ENCODE measurements at regions of chr10 and their contacts with region 1.

Region 1: DNA sequence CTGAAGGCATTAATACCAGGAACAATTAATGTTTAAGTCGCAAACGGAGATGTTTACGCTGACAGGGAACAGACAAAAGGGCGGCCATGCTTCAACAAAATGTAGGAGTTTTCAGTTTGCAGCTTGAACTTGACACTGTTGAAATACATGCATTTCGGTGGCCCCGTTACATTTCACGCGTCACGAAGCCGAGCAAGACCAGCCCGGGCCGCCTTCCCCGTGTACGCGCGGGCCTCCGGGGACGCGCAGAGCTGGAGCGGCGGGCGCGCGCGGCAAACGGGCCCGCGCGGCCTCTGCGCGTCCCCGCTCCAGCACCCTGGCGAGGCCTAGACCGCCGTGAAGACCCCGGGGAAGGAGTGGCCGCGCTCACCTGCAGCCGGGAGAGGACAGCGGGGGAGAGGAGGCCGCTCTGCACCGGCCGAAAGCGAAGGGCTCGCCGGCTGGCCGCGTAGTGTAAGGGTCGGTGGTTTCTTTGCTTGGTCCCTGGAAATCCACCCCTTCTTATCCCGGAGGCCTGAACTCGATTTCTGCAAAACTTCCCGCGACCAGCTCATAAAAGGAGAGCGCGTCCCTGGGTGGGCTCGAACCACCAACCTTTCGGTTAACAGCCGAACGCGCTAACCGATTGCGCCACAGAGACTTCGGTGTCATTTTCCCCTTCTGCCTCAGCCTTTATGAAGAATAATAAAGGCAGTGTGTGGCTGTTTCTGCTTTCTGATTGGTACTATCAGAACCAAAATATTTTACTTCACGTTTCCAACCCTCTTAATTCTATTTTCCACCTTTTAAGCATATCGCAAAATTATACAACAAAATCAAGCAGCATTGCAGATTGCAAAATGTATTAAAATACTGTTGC is 11.4 kb upstream of the EBLN1 start:
- DNase-seq: peak; percentile 85 to 93
- ATAC-seq: peak; percentile 84 to 93 (median 85)
- H3K4me3 ChIP-seq: peak overlapping the region; percentile 69
- H3K4me3 Mint-ChIP-seq: peak overlapping the region; percentile 93
- H3K27ac ChIP-seq: peak overlapping the region; percentile 70
- H3K27ac Mint-ChIP-seq: peak overlapping the region; percentile 96 to 97
- H3K4me1 ChIP-seq: peaks cover 3% of the 10 kb centered on the region
- H3K4me1 Mint-ChIP-seq: peaks cover 15 to 21% of the 10 kb centered on the region in 2 donors
- H3K27me3 ChIP-seq: peaks cover 4% of the 10 kb centered on the region
- H3K27me3 Mint-ChIP-seq: peaks cover 14 to 16% of the 10 kb centered on the region in 2 donors
- CTCF ChIP-seq: no peak

Region 2: DNA sequence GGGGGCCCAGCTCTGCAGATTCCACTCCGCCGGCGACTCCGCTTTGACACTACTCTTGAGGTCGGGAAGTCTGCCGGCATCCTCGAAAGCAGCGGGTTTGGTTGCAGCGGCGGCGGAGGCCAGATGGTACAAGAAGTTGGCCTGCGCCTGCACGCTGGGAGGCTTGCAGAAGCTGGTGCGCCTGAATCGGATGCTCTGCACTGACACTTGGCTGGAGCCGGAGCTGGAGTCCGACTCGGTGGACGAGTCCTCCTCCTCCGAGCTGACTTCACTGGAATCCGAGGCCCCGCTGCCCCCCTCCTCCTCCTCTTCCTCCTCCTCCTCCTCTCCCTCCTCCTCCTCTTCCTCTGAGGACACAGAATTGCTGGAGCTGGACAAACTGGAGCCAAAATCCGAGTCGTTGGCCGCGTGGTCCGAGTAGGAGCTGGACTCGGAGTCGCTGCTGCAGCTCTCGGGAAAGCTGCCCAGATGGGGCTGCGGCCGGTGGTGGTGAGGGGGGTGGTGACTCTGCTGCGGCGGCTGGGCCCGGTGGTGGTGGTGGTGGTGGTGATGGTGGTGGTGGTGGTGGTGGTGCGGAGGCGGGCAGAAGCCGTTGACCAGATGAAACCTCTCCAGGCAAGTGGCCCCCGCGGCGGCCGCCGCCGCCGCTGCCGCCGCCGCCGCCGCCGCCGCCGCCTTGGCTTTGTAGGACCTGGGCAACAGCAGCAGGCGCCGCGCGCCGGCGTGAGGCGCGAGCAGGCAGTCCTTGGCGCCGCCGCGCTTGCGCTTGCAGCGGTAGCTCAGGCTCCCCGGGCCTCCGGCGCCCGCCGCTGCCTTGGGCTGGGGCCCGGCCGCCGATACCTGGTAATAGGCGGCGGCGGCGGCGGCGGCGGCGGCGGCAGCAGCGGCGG is 712.7 kb before region 1 on chr10:
- intact Hi-C with region 1: loop called (anchors 5 kb)
- DNase-seq: peak; percentile 36 to 79
- ATAC-seq: peak; percentile 72 to 83 (median 79)
- H3K4me3 ChIP-seq: peak overlapping the region; percentile 20
- H3K4me3 Mint-ChIP-seq: peak overlapping the region; percentile 86
- H3K27ac ChIP-seq: no peak overlapping the region
- H3K27ac Mint-ChIP-seq: no peak overlapping the region
- H3K4me1 ChIP-seq: peaks cover 34% of the 10 kb centered on the region
- H3K4me1 Mint-ChIP-seq: peaks cover 24 to 29% of the 10 kb centered on the region in 2 donors
- H3K27me3 ChIP-seq: peaks cover 82% of the 10 kb centered on the region
- H3K27me3 Mint-ChIP-seq: peaks cover 67 to 83% of the 10 kb centered on the region in 2 donors
- CTCF ChIP-seq: no peak

Region 3: DNA sequence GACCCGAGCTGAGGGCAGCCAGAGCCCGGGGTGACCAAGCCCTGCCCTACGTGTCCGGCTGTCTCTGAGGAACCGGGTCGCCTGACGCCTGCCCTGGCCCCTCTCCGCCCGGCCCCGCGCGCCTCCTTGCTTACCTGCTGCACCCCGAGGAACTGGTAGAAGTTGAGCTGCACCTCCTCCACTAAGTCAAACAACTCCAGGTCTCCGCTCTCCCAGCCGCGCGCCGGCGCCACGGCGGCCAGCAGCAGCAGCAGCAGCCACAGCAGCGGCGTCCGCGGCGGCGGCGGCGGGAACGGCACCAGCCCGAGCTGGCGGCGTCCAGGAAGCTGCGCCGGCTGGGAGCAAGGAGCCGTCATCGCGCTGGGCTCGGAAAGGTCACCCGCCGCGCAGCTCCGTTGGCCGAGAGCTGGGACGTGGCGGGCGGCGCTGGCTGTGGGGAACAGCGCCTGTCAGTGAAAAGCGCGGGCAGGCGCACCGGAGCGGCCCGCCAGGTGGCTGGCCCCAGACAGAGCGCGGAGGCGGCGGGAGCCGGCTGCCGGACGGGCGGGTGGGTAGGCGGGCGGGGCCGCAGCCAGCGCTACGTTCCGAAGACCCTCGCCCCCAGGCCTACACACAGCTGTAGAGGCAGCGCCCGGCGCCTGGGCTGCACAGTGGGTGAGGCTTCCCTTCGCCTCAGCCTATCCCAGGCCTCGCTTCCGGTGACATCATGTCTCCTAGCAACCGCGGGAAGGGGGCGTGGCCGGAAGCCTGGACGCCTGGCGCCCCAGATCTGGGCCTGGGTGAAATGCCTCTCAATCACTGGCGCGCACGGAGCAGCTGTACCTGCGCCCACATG is 225.9 kb before region 1 on chr10 and contains the start of gene DNAJC1:
- intact Hi-C with region 1: loop called (anchors 5 kb)
- DNase-seq: peak; percentile 96 to 98
- ATAC-seq: peak; percentile 84 to 96 (median 89)
- H3K4me3 ChIP-seq: peak within 1 kb of the TSS; percentile 96
- H3K4me3 Mint-ChIP-seq: peak within 1 kb of the TSS; percentile 91
- H3K27ac ChIP-seq: peak within 1 kb of the TSS; percentile 97
- H3K27ac Mint-ChIP-seq: peak within 1 kb of the TSS; percentile 85 to 88
- H3K4me1 ChIP-seq: peaks cover 4% of the 10 kb centered on the region
- H3K4me1 Mint-ChIP-seq: peaks cover 38 to 45% of the 10 kb centered on the region in 2 donors
- H3K27me3 ChIP-seq: no peaks in the 10 kb centered on the region
- H3K27me3 Mint-ChIP-seq: peaks cover 0 to 5% of the 10 kb centered on the region in 2 donors
- CTCF ChIP-seq: peak; percentile 9
- total RNA-seq, gene DNAJC1: 38.4 to 63.7 (median 50.6) TPM

Region 4: DNA sequence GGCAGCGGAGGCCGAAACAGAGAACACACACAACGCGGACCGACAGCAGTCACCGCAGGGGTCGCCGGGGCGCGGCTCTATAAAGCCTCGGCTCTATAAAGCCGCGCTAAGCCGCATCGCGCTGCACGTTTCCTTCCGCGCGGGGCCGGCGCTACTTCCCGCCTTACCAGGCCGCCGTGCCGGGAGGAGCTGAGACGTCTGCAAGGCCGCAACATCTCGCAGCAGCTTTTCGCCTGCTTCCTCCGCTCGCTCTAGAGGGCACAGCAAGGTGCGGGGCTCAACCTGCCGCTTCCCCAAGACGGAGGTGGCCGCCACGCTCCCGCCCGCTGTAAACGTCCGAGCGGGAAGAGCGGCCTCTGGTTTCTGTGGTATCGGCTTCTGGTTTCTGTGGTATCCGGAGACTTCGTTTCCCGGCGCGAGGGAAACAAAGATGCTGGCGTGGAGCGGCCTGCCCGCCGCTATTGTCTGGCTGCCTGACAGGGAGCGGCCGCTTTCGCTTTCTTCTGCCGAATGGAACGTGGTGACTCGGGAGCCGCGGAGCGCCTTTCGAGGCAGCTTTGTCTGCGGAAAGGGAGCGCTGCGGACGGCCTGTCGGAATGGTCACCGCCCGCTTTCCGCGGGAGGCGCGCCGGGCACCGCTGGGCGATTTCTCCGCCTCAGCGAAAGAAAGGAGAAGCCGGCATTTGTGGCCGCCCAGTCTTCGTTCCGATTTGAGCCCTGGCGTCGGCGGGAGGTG is 207.9 kb after region 1 on chr10:
- intact Hi-C with region 1: loop called (anchors 1 kb)
- DNase-seq: peak; percentile 86 to 95
- ATAC-seq: peak; percentile 80 to 93 (median 85)
- H3K4me3 ChIP-seq: peak overlapping the region; percentile 73
- H3K4me3 Mint-ChIP-seq: peak overlapping the region; percentile 95
- H3K27ac ChIP-seq: peak overlapping the region; percentile 98
- H3K27ac Mint-ChIP-seq: peak overlapping the region; percentile 97
- H3K4me1 ChIP-seq: peaks cover 23% of the 10 kb centered on the region
- H3K4me1 Mint-ChIP-seq: peaks cover 37 to 43% of the 10 kb centered on the region in 2 donors
- H3K27me3 ChIP-seq: peaks cover 2% of the 10 kb centered on the region
- H3K27me3 Mint-ChIP-seq: no peaks in the 10 kb centered on the region
- CTCF ChIP-seq: no peak

Region 5: DNA sequence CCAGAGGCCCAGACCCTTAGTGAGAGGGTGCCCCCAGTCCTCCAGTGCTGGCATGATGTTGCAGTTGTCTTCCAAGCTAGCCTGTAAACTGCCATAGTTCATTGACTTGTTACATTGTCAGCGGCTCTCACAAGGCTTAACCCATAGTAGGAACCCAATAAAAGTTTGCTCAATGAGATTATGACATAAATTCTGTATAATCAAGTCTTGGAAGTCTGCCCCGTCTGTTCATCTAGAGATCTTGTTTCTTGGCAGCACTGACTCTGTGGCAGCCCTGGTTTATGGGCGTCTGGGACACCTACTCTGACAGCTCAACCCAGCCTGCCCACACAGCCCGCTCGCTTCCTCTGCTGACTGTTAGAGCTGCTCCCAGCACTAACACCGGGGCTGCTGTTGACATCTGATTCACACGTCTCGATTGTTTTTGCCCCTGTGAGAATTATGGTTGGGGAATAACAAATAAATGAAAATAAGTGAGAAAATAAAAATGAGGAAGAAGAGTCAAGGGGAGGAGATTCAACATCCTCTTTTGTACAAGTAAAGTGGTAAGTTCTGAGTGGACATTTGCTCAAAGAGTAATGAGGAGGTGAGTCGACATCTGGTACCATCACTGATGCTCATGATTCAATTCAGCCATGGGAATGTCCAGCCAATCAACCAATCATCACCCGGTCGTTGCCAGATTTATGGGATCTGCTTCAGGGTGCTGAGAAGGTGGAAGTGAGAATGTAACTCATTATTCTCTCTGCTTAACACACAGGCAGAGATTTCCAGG is 276.9 kb after region 1 on chr10:
- intact Hi-C with region 1: loop called (anchors 10 kb)
- DNase-seq: peak; percentile 72 to 81
- ATAC-seq: peak; percentile 93 to 99 (median 99)
- H3K4me3 ChIP-seq: no peak overlapping the region
- H3K4me3 Mint-ChIP-seq: peak overlapping the region; percentile 85
- H3K27ac ChIP-seq: peak overlapping the region; percentile 54
- H3K27ac Mint-ChIP-seq: peak overlapping the region; percentile 86 to 89
- H3K4me1 ChIP-seq: peaks cover 32% of the 10 kb centered on the region
- H3K4me1 Mint-ChIP-seq: peaks cover 63 to 67% of the 10 kb centered on the region in 2 donors
- H3K27me3 ChIP-seq: no peaks in the 10 kb centered on the region
- H3K27me3 Mint-ChIP-seq: peaks cover 0 to 7% of the 10 kb centered on the region in 2 donors
- CTCF ChIP-seq: no peak

Measured in natural killer cell (primary cell).